OCI-LY7 (cell line): ENCODE measurements at regions of chr12 and their contacts with region 1.

Region 1: GRCh38 chr12:120167529-120168095 is 26.9 kb downstream of the GCN1 start:
- DNase-seq: peak; percentile 34
- H3K4me3 ChIP-seq: peak overlapping the region; percentile 0
- H3K27ac ChIP-seq: peak overlapping the region; percentile 83
- H3K4me1 ChIP-seq: peaks cover 43% of the 10 kb centered on the region
- CTCF ChIP-seq: no peak

Region 2: DNA sequence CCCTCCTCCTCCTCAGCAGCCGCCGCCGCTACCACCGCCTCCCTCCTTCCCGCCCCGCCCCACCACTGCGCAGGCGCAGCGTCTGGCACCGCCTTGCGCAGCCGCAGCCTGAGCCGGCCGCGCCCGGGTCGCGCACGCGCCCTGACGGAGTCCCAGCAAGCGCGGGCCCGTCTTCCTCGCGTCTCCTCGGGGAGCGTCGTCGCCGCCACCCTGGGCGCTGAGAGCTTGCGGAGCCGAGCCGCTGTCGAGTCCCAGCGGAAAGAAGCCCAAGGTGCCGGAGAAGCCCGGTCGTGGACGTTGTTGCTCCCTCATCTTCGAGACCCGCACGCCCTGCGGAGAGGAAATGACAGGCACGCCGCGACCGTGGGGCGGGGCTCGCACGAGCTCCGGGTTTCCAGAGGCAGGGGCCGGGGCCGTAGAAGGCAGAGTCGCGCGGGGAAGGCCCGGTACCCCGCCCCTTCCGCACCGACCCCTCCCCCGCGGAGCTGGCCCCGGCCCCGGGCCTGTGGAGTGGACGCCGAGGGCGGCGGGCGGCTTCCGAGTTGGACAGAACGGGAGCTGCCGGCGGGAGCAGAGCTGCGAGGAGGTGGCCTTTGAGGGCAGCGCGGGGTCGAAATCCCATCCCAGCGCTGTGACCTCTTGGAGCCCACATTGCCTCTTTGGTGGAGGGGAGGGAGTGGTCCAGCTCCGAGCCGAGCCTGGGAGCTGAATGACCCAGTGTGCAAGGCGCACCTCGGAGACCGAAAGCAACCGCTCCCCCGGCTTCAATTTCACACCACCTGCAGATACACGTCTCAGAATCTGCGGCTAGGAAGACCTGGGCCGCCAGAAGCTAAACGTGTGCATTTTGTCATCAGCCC is 50.6 kb before region 1 on chr12:
- CTCF ChIA-PET with region 1: interaction called, 7 read pairs
- POLR2A ChIA-PET with region 1: interaction called, 16 read pairs
- intact Hi-C with region 1: loop called (anchors 2 kb)
- DNase-seq: peak; percentile 93
- H3K4me3 ChIP-seq: peak overlapping the region; percentile 90
- H3K27ac ChIP-seq: peak overlapping the region; percentile 77
- H3K4me1 ChIP-seq: peaks cover 56% of the 10 kb centered on the region
- CTCF ChIP-seq: no peak

Region 3: GRCh38 chr12:120132863-120133385 is 34.7 kb before region 1 on chr12:
- CTCF ChIA-PET with region 1: interaction called, 7 read pairs
- POLR2A ChIA-PET with region 1: interaction called, 7 read pairs
- intact Hi-C with region 1: loop called (anchors 5 kb)
- DNase-seq: peak; percentile 83
- H3K4me3 ChIP-seq: peak overlapping the region; percentile 39
- H3K27ac ChIP-seq: peak overlapping the region; percentile 92
- H3K4me1 ChIP-seq: peaks cover 33% of the 10 kb centered on the region
- CTCF ChIP-seq: no peak

Region 4: DNA sequence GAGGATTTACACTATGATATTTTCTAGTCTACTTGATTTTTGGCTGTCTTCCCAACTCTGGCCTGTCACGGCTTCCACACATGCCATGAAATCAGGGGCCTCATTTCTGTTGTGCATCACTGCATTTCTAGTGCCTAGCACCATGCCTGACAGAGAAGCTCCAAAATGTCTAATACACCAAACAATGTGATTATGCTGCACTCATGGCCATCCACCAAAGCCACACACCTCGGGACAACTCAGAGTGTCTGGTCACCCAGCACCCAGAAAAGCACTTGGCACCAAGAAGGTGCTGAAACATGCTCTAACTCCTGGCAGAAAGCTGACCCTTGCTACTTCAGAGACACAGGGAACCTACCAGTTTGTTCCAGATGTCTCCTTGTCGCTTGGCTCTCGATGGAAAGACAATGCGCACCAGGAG is 15.6 kb after region 1 on chr12:
- CTCF ChIA-PET with region 1: interaction called, 14 read pairs
- POLR2A ChIA-PET with region 1: interaction called, 17 read pairs
- intact Hi-C with region 1: no loop called
- DNase-seq: no peak
- H3K4me3 ChIP-seq: no peak overlapping the region
- H3K27ac ChIP-seq: no peak overlapping the region
- H3K4me1 ChIP-seq: no peaks in the 10 kb centered on the region
- CTCF ChIP-seq: no peak

Region 5: GRCh38 chr12:120194534-120195395 is 27.2 kb after region 1 on chr12 and contains the start of gene GCN1:
- CTCF ChIA-PET with region 1: interaction called, 3 read pairs
- POLR2A ChIA-PET with region 1: interaction called, 91 read pairs
- intact Hi-C with region 1: loop called (anchors 1 kb)
- DNase-seq: peak; percentile 86
- H3K4me3 ChIP-seq: peak within 1 kb of the TSS; percentile 90
- H3K27ac ChIP-seq: peak within 1 kb of the TSS; percentile 95
- H3K4me1 ChIP-seq: peaks cover 81% of the 10 kb centered on the region
- CTCF ChIP-seq: no peak
- total RNA-seq, gene GCN1: 217 and 224 TPM in 2 replicates